ENCODE measurements at regions of chr10 and their contacts with region 1.

Region 1: GRCh38 chr10:98467506-98468346 is 21.0 kb upstream of the HPS1 start:
- DNase-seq: peak; percentile 70
- H3K4me3 Mint-ChIP-seq: peak overlapping the region; percentile 80
- H3K27ac Mint-ChIP-seq: no peak overlapping the region
- H3K4me1 Mint-ChIP-seq: peaks cover 4% of the 10 kb centered on the region
- H3K27me3 Mint-ChIP-seq: peaks cover 2% of the 10 kb centered on the region

Region 2: DNA sequence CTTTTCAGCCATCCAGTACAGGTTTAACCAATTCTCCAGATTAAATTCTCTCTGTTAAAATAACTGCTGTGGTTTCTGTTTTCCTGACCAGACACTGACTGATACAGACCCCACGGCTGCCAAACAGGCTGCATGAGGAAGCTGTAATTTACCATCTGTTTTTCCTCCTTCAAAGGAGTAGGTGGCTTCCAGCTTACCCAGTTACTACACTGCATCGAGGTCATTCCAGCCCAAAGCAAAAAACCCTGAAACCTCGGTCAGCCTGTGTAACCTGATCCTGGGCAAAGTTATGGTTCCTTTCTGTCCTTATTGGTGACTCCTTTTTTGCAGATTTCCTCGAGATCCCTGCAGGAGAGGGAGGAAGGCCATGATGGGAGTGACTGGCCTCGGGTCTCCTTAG is 171.8 kb before region 1 on chr10:
- CTCF ChIA-PET with region 1: no interaction called
- POLR2A ChIA-PET with region 1: no interaction called
- intact Hi-C with region 1: no loop called
- DNase-seq: no peak
- H3K4me3 Mint-ChIP-seq: no peak overlapping the region
- H3K27ac Mint-ChIP-seq: no peak overlapping the region
- H3K4me1 Mint-ChIP-seq: no peaks in the 10 kb centered on the region
- H3K27me3 Mint-ChIP-seq: peaks cover 19% of the 10 kb centered on the region

Region 3: DNA sequence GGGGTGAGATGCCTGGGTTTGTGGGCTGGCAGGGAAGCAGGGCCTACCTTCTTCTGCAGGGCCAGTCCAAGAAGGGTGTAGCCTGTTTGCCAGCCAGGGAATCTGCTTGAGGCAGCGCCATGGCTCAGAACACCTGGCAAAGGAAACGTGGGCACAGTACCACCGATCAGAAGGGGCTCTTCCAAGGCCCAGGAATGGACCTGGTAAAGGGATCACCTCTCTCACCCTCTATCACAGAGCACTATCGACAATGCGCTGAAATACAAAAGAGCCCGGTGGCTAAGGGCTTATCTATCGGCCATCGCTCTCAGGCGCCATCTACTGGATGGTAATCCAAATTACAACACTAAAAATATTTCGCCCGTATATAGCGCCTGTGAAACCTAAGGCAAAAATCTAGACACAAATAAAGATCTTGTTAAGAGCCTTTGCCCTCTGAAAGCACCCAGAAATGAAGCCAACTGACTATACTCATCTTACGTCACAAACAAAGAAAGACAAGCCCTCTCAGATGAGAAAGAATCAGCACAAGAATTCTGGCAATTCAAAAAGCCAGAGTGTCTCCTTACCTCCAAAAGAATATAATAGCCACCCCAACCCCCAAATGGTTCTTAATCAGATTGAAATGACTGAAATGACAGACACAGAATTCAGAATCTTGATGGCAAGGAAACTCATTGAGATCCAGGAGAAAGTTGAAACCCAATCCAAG is 196.8 kb after region 1 on chr10:
- CTCF ChIA-PET with region 1: interaction called, 27 read pairs
- POLR2A ChIA-PET with region 1: no interaction called
- intact Hi-C with region 1: loop called (anchors 1 kb)
- DNase-seq: peak; percentile 35
- H3K4me3 Mint-ChIP-seq: no peak overlapping the region
- H3K27ac Mint-ChIP-seq: no peak overlapping the region
- H3K4me1 Mint-ChIP-seq: no peaks in the 10 kb centered on the region
- H3K27me3 Mint-ChIP-seq: peaks cover 13% of the 10 kb centered on the region

Region 4: GRCh38 chr10:99042051-99042771 is 574.5 kb after region 1 on chr10:
- CTCF ChIA-PET with region 1: interaction called, 8 read pairs
- POLR2A ChIA-PET with region 1: no interaction called
- intact Hi-C with region 1: loop called (anchors 2 kb)
- DNase-seq: no peak
- H3K4me3 Mint-ChIP-seq: no peak overlapping the region
- H3K27ac Mint-ChIP-seq: no peak overlapping the region
- H3K4me1 Mint-ChIP-seq: no peaks in the 10 kb centered on the region
- H3K27me3 Mint-ChIP-seq: no peaks in the 10 kb centered on the region

Region 5: DNA sequence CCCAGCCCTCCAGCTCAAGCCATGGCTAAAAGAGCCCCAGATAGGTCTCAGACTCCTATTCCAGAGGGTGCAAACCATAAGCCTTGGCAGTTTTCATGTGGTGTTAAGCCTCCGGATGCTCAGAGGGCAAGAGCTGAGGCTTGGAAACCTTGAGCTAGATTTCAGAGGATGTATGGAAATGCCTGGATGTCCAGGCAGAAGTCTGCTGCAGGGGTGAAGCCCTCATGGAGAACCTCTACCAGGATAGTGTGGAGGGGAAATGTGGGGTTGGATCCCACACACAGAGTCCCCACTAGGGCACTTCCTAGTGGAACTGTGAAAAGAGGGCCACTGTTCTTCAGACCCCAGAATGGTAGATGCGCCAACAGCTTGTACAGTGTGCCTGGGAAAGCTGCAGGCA is 781.1 kb after region 1 on chr10:
- CTCF ChIA-PET with region 1: interaction called, 52 read pairs
- POLR2A ChIA-PET with region 1: no interaction called
- intact Hi-C with region 1: loop called (anchors 1 kb)
- DNase-seq: no peak
- H3K4me3 Mint-ChIP-seq: no peak overlapping the region
- H3K27ac Mint-ChIP-seq: no peak overlapping the region
- H3K4me1 Mint-ChIP-seq: no peaks in the 10 kb centered on the region
- H3K27me3 Mint-ChIP-seq: peaks cover 16% of the 10 kb centered on the region